Lower lobe of right lung (tissue), 2 donors: ENCODE measurements at regions of chr6 and their contacts with region 1.

Region 1: DNA sequence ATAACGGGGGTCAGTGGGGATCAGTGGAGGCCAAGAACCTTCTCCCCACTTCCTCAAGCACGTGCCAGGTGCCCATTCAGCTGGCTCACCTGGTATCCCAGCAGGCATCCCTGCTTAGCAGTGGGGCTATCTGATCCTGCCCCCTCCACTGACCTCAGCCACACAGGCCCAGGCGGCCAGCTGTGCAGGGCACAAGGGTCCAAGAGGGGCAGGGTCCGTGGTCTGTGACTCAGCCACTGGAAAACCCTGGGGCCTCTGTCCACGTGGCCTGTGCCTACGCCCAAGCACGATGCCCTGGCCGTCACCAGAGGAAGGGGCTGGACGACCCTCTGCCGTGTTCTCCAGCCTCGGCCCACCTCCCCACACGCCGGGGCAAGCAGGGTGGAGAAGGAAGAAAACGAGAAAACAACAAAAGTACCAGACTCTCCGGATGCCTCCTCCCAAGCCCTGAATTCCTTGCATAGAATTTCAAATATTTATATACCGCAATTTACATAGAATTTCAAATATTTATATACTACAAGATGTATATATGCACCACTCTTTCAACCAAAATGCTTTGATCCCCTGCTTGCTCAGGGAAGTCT is 12.1 kb downstream of the PXDC1 start:
- DNase-seq: no peak
- ATAC-seq: no peak
- H3K4me3 ChIP-seq: no peak overlapping the region
- H3K27ac ChIP-seq: no peak overlapping the region
- H3K4me1 ChIP-seq: peaks cover 55% of the 10 kb centered on the region
- H3K27me3 ChIP-seq: no peaks in the 10 kb centered on the region
- CTCF ChIP-seq: no peak

Region 2: GRCh38 chr6:3277851-3278416 is 461.5 kb before region 1 on chr6:
- intact Hi-C with region 1: loop called (anchors 5 kb)
- DNase-seq: no peak
- ATAC-seq: no peak
- H3K4me3 ChIP-seq: no peak overlapping the region
- H3K27ac ChIP-seq: no peak overlapping the region
- H3K4me1 ChIP-seq: peaks cover 18% of the 10 kb centered on the region
- H3K27me3 ChIP-seq: no peaks in the 10 kb centered on the region
- CTCF ChIP-seq: no peak

Region 3: GRCh38 chr6:4030669-4031068 is 291.3 kb after region 1 on chr6:
- intact Hi-C with region 1: no loop called
- DNase-seq: no peak
- ATAC-seq: no peak
- H3K4me3 ChIP-seq: no peak overlapping the region
- H3K27ac ChIP-seq: no peak overlapping the region
- H3K4me1 ChIP-seq: peaks cover 39% of the 10 kb centered on the region
- H3K27me3 ChIP-seq: no peaks in the 10 kb centered on the region
- CTCF ChIP-seq: no peak